Heart right ventricle (tissue), 16 donors: ENCODE measurements at regions of chr16 and their contacts with region 1.

Region 1: GRCh38 chr16:69644790-69645189 is 79.0 kb downstream of the NFAT5 start:
- DNase-seq: no peak
- ATAC-seq: no peak
- H3K4me3 ChIP-seq: no peak overlapping the region
- H3K27ac ChIP-seq: no peak overlapping the region
- H3K4me1 ChIP-seq: peaks cover 0 to 6% (median 0%) of the 10 kb centered on the region in 9 donors
- H3K27me3 ChIP-seq: no peaks in the 10 kb centered on the region
- CTCF ChIP-seq: no peak

Region 2: DNA sequence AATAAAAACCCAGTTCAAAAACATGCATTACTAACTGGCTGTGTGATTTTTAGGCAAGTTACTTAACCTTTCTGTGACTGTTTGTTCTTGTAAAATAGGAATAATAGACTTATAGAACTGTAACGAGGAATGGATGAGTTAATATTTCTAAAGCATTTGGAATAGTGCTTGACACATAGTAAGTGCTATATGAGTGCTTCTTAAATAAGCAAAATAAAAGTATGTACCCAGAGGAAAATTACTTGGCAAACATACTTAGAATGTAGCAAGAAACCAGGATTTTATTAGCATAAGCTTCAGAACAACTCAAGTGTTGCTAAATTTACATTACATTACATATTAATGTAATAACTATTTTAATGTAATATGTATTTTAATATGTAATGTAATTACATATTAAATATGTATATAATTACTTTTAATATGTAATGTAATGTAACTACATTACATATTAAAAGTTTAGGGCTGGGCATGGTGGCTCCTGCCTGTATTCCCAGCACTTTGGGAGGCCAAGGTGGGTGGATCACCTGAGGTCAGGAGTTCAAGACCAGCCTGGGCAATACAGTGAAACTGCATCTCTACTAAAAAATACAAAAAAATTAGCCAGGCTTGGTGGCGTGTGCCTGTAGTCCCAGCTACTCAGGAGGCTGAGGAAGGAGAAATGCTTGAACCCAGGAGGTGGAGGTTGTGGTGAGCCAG is 64.9 kb before region 1 on chr16:
- intact Hi-C with region 1: loop called in 1 of 10 experiments (anchors 10 kb)
- DNase-seq: no peak
- ATAC-seq: no peak
- H3K4me3 ChIP-seq: no peak overlapping the region
- H3K27ac ChIP-seq: no peak overlapping the region
- H3K4me1 ChIP-seq: peaks cover 0 to 40% (median 11%) of the 10 kb centered on the region in 9 donors
- H3K27me3 ChIP-seq: no peaks in the 10 kb centered on the region
- CTCF ChIP-seq: no peak

Region 3: DNA sequence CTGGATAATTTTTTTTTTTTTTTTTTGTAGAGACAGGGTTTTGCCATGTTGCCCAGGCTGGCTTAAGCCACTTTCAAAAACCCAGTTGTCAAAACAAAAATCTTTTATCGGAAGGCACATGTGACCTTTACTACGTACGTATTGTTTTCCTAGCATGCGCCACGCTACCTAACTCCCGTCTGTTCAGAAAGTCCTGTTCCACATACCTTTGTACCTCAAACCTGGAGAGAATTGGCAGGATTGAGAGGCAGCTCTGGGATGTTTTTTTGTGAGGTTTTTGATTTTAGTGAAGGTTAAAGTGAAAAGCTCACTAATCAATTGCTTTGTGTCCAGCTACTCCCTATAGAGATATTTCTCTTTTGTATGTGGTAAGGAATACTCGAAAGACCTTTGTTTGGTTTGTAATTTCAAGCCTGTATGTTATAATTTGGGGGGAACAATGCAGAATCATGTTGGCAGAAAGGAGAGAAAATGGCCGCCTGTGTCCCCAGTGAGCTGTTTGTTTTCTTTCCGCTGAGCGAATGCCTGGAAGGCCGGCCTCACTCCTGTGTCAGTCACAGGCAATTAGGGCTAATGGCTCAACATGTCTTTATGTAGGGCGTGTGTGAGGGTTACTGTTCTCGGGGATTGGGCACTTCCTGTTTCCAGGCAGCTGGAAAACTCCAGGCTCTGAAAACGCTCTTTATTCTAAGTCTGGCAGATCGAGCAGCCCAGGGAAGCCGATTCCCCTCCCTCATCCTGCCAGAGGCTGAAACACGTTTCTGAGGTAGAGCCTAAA is 245.5 kb after region 1 on chr16:
- intact Hi-C with region 1: no loop called
- DNase-seq: peak; percentile 47 to 71
- ATAC-seq: peak; percentile 60 to 94 (median 90)
- H3K4me3 ChIP-seq: peak overlapping the region in 1 of 10 donors; percentile 16
- H3K27ac ChIP-seq: peak overlapping the region; percentile 68 to 91 (median 81)
- H3K4me1 ChIP-seq: peaks cover 0 to 24% (median 15%) of the 10 kb centered on the region in 9 donors
- H3K27me3 ChIP-seq: no peaks in the 10 kb centered on the region
- CTCF ChIP-seq: no peak